ENCODE measurements at regions of chr1 and their contacts with region 1.

Region 1: GRCh38 chr1:8211589-8212442 is 106.1 kb upstream of the SLC45A1 start:
- DNase-seq: peak; percentile 84 to 95
- H3K4me3 ChIP-seq: peak overlapping the region; percentile 38; the same call in 1 of the 2 replicates
- H3K27ac ChIP-seq: peak overlapping the region; percentile 99
- H3K4me1 ChIP-seq: peaks cover 51% of the 10 kb centered on the region
- H3K27me3 ChIP-seq: no peaks in the 10 kb centered on the region
- CTCF ChIP-seq: no peak

Region 2: DNA sequence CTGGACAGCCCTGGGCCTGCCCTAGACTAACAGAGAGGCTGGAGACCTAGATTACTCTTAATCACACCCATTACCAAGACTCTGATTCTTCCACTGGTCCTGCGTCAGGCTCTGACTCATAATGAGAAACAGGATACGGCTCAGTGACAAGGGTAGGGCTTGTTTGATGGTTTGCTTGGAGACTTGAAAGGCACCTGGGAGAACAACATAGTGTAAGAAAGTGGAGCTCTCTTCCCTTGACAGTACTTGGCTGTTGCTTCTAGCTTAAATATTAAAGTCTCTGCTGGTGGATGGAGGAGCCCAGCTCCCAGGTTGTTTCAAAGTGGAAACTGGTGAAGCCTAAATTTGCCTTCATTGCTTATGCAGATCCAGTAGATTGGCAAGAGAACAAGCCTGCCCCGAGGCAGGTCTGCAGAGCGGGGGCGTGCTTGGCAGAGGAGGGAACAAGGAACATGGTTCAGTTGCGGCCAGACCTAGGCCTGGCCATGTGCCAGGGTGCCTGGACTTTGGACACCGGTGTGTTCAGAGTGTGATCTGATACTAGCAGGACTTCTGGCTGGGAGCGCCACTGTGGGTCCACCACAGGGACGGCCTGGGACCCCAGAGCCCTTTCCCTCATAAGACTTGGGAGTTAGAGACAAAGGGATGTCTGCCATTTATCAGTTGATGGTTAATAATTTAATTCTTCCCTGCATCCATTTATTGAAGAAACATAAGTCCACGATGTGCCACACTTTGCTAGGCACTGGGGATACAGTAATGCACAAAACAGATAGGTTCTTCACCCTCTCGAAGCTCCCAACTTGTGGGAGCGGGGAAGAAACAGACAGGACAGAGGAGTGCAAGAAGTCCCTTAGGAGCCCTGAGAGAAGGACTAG is 945.8 kb before region 1 on chr1:
- CTCF ChIA-PET with region 1: no interaction called
- POLR2A ChIA-PET with region 1: no interaction called
- intact Hi-C with region 1: no loop called
- DNase-seq: peak in 1 of 2 experiments; percentile 11
- H3K4me3 ChIP-seq: no peak overlapping the region
- H3K27ac ChIP-seq: no peak overlapping the region
- H3K4me1 ChIP-seq: no peaks in the 10 kb centered on the region
- H3K27me3 ChIP-seq: peaks cover 30% of the 10 kb centered on the region
- CTCF ChIP-seq: no peak

Region 3: DNA sequence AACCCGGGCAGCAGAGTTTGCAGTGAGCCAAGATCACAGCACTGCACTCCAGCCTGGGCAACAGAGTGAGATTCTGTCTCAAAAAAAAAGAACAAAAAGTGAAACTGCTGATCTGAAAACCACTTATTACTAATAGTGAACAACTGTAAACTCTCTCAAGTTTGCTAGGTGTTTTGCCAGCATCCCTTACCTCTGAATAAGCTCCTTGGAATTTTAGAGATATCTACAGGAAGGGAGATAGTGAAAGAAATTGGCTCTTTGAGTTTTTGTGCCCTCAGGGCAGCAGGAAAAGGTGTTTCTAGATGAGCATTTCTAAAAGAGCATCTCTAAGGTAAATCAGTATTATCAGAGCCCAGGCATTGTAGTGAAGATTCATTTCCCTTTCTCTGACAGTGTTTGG is 223.2 kb before region 1 on chr1:
- CTCF ChIA-PET with region 1: interaction called, 13 read pairs
- POLR2A ChIA-PET with region 1: no interaction called
- intact Hi-C with region 1: no loop called
- DNase-seq: peak; percentile 39 to 79
- H3K4me3 ChIP-seq: no peak overlapping the region
- H3K27ac ChIP-seq: peak overlapping the region; percentile 69
- H3K4me1 ChIP-seq: peaks cover 17% of the 10 kb centered on the region
- H3K27me3 ChIP-seq: no peaks in the 10 kb centered on the region
- CTCF ChIP-seq: no peak

Region 4: GRCh38 chr1:8238851-8239305 is 27.1 kb after region 1 on chr1:
- CTCF ChIA-PET with region 1: interaction called, 14 read pairs
- POLR2A ChIA-PET with region 1: no interaction called
- intact Hi-C with region 1: no loop called
- DNase-seq: peak; percentile 60 to 87
- H3K4me3 ChIP-seq: no peak overlapping the region
- H3K27ac ChIP-seq: peak overlapping the region; percentile 95
- H3K4me1 ChIP-seq: peaks cover 24% of the 10 kb centered on the region
- H3K27me3 ChIP-seq: no peaks in the 10 kb centered on the region
- CTCF ChIP-seq: no peak; the same call in 1 of the 2 replicates

Region 5: GRCh38 chr1:8506995-8507615 is 295.3 kb after region 1 on chr1:
- CTCF ChIA-PET with region 1: no interaction called
- POLR2A ChIA-PET with region 1: no interaction called
- intact Hi-C with region 1: no loop called
- DNase-seq: no peak
- H3K4me3 ChIP-seq: no peak overlapping the region
- H3K27ac ChIP-seq: no peak overlapping the region
- H3K4me1 ChIP-seq: no peaks in the 10 kb centered on the region
- H3K27me3 ChIP-seq: no peaks in the 10 kb centered on the region
- CTCF ChIP-seq: no peak

Region 6: GRCh38 chr1:9737057-9737456 is 1525.2 kb after region 1 on chr1:
- CTCF ChIA-PET with region 1: no interaction called
- POLR2A ChIA-PET with region 1: no interaction called
- intact Hi-C with region 1: no loop called
- DNase-seq: no peak
- H3K4me3 ChIP-seq: no peak overlapping the region
- H3K27ac ChIP-seq: no peak overlapping the region
- H3K4me1 ChIP-seq: no peaks in the 10 kb centered on the region
- H3K27me3 ChIP-seq: no peaks in the 10 kb centered on the region
- CTCF ChIP-seq: no peak

Measured in PC-9 (cell line).